ENCODE measurements at regions of chr14 and their contacts with region 1.

Region 1: GRCh38 chr14:20682435-20683124 is 1.8 kb upstream of the RNASE4 start:
- DNase-seq: peak; percentile 89 to 98
- H3K4me3 ChIP-seq: peak overlapping the region; percentile 57
- CTCF ChIP-seq: no peak
- POLR2A ChIP-seq: peak in 1 of 2 donors; percentile 95

Region 2: DNA sequence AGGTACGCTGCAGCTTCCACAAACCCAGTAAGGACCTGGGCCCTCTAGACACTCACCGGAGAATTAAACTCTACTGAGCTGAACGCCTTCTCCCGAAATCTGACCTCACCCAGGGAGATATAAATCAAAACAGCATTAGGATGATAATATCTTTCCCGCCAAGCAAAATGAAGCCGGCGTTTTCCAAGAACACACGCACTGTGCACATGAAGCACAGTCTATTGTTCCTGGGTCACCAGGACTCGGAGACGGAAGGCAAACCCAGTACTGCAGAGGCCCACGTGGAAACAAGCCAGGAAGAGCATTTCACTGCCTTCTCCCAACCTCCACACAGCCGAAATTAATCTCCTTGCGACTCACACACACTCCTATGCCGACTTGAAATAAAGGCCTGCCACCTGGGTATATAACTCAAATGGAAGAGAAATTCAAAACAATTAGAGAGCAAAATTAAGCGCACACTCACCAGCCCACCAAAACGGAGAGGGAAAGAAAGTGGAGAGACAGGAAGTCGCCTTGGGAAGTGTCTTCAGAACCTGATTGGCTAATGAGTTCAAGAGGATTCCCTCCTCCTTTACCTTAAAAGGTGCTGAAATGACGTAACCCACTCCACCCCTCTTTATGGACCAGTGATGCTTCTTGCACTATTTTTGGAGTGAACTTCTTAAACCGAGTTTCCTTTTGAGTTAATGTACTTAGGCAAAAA is 349.6 kb before region 1 on chr14 and contains the start of gene CCNB1IP1:
- intact Hi-C with region 1: loop called (anchors 5 kb)
- DNase-seq: peak; percentile 68 to 88
- H3K4me3 ChIP-seq: peak within 1 kb of the TSS; percentile 48
- CTCF ChIP-seq: no peak
- POLR2A ChIP-seq: no peak
- total RNA-seq, gene CCNB1IP1: 39.1 to 58.1 (median 50.4) TPM

Region 3: DNA sequence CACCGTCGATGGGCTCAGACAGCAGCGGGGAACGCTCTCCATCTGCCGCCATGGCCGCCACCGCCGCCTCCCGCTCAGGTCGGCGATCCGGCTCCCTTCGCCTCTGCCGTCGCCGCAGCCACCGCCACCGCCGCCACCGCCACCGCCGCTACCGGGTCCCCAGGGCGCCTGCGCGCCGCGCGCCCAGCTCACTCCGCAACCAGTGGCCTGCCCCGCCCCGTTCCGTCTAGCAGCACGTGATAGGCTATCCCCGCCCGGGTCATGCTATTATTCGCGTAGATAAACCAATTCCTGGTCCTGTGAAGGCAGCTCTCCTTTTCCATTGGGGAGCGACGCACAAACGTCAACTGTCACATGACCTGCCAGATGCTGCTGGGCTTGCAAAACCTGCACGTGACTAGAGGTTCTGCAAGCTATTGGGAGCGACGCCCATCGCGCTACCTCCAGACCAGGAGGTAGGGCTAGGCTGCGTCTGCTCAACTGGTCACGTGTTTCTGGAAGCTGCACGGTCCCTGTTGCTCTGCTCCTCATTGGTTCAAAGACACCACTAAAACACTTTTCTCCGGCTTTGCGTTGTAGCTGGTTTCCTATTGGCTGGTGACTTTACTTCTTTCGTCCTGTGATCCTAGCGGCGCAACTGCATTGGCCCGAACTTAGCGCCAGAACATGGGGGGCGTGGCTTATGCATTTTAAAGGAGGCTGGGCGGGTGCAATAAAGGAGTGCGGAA is 221.1 kb before region 1 on chr14 and contains the start of gene PIP4P1:
- intact Hi-C with region 1: loop called (anchors 10 kb)
- DNase-seq: peak; percentile 100
- H3K4me3 ChIP-seq: peak within 1 kb of the TSS; percentile 62
- CTCF ChIP-seq: no peak
- POLR2A ChIP-seq: peak in 1 of 2 donors; percentile 89
- total RNA-seq, gene PIP4P1: 26.0 to 34.6 (median 27.6) TPM

Region 4: GRCh38 chr14:20613094-20614037 is 69.2 kb before region 1 on chr14:
- intact Hi-C with region 1: loop called (anchors 5 kb)
- DNase-seq: peak; percentile 85 to 96
- H3K4me3 ChIP-seq: peak overlapping the region; percentile 43
- CTCF ChIP-seq: peak in 1 of 3 donors; percentile 94
- POLR2A ChIP-seq: no peak